HepG2 (cell line): ENCODE measurements at regions of chr17 and their contacts with region 1.

Region 1: GRCh38 chr17:29807520-29808351 is 122.3 kb downstream of the SSH2 start:
- DNase-seq: peak; percentile 57
- ATAC-seq: peak; percentile 67
- H3K4me3 ChIP-seq: no peak overlapping the region
- H3K27ac ChIP-seq: no peak overlapping the region
- H3K4me1 ChIP-seq: no peaks in the 10 kb centered on the region
- H3K27me3 ChIP-seq: no peaks in the 10 kb centered on the region
- CTCF ChIP-seq: peak; percentile 71
- EP300 ChIP-seq: no peak
- POLR2A ChIP-seq: no peak
- RAD21 ChIP-seq: peak; percentile 56

Region 2: DNA sequence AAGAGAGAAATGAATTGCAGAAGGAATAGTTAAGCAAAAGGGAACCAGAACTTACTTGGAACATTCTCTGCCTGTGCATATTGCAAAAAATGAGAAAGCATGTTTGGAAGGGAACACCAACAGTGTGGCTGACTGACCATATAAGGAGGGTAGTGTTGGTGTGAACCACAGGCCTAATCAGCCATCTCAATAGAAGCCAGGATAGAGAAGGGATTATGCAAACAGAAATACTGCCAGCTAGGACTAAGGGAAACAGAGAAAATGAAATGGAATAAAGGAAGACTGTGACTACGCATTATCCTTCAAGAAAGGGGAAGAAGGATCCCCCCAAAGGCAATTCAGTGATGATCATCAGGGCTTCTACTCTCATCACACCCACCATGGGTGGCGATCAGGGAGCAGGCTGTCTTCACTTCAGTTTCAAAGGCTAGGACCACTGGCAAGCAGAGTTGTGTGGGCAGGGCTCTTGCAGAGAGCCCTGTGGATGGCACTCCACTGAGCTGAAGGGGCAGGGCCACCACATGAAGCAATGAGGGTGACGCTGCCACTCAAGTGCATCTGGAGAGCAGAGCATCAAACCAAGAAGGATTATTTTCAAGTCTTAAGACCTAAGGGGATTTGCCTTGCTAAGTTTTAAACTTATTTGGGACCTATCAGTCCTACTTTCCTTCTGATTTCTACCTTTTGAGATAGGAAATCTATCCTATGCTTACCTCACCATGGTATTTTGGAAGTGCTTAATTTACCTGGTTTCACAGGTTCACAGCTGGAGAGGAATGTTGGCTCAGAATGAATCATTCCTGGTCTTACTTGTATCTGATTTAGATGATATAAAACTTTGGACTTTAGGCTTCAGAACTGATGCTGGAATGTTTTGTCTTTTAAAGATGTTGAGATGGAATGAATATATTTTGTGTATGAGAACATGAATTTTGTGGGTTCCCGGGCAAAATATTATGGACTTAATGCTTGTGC is 18.3 kb before region 1 on chr17:
- CTCF ChIA-PET with region 1: no interaction called
- POLR2A ChIA-PET with region 1: no interaction called
- in situ Hi-C with region 1: no loop called
- intact Hi-C with region 1: no loop called
- DNase-seq: no peak
- ATAC-seq: no peak
- H3K4me3 ChIP-seq: no peak overlapping the region
- H3K27ac ChIP-seq: no peak overlapping the region
- H3K4me1 ChIP-seq: no peaks in the 10 kb centered on the region
- H3K27me3 ChIP-seq: no peaks in the 10 kb centered on the region
- CTCF ChIP-seq: no peak
- EP300 ChIP-seq: no peak
- POLR2A ChIP-seq: no peak
- RAD21 ChIP-seq: no peak

Region 3: DNA sequence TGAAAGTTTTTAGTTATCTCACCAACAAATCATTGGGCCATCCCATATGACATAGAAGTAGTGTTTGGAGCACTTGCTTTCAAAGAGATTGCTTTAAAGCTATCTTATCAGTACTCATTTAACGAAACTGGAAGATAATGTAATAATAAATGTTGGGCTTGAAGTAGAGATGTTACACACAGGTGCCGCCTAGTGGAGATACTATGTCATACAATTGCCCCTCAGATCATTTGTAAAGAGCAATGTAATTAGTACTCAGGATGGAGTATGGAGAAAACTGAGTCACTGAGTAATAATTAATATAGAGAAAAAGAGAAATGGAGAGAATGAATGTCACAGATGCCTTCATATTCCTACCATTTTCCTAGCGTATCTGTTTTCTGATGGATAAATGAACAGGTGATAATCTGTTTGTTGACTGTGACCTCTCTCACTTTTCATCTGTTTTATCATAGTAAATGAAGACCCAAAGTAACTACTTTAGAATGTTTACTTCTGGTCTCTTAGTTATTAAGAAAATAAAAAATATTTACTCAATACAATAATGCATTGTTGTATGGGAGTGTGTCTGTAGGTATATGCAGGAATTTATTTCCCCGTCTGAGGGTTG is 214.1 kb after region 1 on chr17:
- CTCF ChIA-PET with region 1: interaction called, 23 read pairs
- POLR2A ChIA-PET with region 1: no interaction called
- in situ Hi-C with region 1: no loop called
- intact Hi-C with region 1: loop called (anchors 1 kb)
- DNase-seq: peak; percentile 34
- ATAC-seq: no peak
- H3K4me3 ChIP-seq: no peak overlapping the region
- H3K27ac ChIP-seq: no peak overlapping the region
- H3K4me1 ChIP-seq: no peaks in the 10 kb centered on the region
- H3K27me3 ChIP-seq: no peaks in the 10 kb centered on the region
- CTCF ChIP-seq: peak; percentile 71
- EP300 ChIP-seq: no peak
- POLR2A ChIP-seq: no peak
- RAD21 ChIP-seq: no peak

Region 4: DNA sequence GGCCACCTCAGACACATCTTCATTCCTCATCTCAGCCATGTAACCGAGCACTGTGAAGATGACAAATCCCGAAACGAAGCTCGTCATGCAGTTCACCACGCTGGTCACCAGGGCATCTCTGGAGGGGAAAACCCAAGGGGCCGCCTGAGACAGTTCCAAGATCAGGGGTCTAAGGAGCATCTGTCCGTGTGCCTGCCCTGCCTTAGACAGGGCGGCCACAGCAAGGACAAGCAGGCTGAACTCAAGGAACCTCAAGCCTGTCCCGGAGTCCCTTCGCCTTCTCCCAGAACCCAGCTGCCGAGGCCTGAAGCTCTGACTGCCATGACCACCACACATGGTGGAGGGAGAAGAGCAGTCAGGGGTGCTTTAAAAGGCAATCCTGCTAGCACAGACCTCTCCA is 405.0 kb after region 1 on chr17:
- CTCF ChIA-PET with region 1: no interaction called
- POLR2A ChIA-PET with region 1: no interaction called
- in situ Hi-C with region 1: no loop called
- intact Hi-C with region 1: no loop called
- DNase-seq: no peak
- ATAC-seq: no peak; the same call in 2 of the 3 replicates
- H3K4me3 ChIP-seq: no peak overlapping the region
- H3K27ac ChIP-seq: no peak overlapping the region
- H3K4me1 ChIP-seq: no peaks in the 10 kb centered on the region
- H3K27me3 ChIP-seq: no peaks in the 10 kb centered on the region
- CTCF ChIP-seq: no peak
- EP300 ChIP-seq: no peak
- POLR2A ChIP-seq: no peak
- RAD21 ChIP-seq: no peak